ENCODE measurements at regions of chr17 and their contacts with region 1.

Region 1: GRCh38 chr17:81440876-81441244 is 45.6 kb downstream of the BAHCC1 start:
- DNase-seq: peak; percentile 50 to 90
- H3K4me3 ChIP-seq: no peak overlapping the region
- H3K27ac ChIP-seq: no peak overlapping the region
- H3K4me1 ChIP-seq: peaks cover 0 to 2% (median under 1%) of the 10 kb centered on the region in 4 experiments; a peak in 3 of 7 replicates
- H3K27me3 ChIP-seq: no peaks in the 10 kb centered on the region
- CTCF ChIP-seq: peak; percentile 88 to 98 (median 94)
- EP300 ChIP-seq: no peak
- POLR2A ChIP-seq: no peak
- RAD21 ChIP-seq: peak; percentile 67 to 73

Region 2: DNA sequence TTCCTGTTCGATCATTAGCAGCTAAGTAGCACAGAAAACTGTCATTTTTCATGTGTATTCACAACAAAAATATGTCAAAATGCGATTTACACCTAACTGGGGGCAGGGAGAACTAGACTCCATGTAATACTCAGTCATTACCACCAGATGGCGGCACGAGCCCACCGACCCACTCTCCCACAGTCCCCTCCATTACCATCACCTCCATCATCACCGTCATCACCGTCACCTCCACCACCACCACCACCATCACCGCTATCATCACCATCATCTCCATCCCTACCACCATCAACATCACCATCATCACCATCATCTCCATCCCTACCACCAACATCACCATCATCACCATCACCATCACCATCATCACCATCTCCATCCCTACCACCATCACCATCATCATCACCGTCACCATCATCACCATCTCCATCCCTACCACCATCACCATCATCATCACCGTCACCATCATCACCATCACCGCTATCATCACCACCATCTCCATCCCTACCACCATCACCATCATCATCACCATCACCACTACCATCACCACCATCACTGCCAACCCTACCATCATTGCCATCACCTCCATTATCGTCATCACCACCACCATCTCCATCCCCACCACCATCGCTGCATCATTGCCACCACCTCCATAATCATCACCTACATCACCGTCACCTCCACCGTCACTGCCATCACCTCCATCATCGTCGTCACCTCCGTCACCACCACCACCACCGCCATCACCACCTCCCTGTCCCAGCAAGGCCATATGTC is 187.3 kb before region 1 on chr17:
- CTCF ChIA-PET with region 1: interaction called, 14 read pairs
- POLR2A ChIA-PET with region 1: no interaction called
- DNase-seq: peak in 1 of 2 experiments; percentile 74
- H3K4me3 ChIP-seq: no peak overlapping the region
- H3K27ac ChIP-seq: no peak overlapping the region
- H3K4me1 ChIP-seq: peaks cover 0 to 8% (median 2%) of the 10 kb centered on the region in 4 experiments; a peak in 3 of 7 replicates
- H3K27me3 ChIP-seq: no peaks in the 10 kb centered on the region
- CTCF ChIP-seq: peak; percentile 74 to 88 (median 87)
- EP300 ChIP-seq: no peak
- POLR2A ChIP-seq: no peak
- RAD21 ChIP-seq: peak; percentile 89 to 98

Region 3: GRCh38 chr17:81401723-81402529 is 38.9 kb before region 1 on chr17:
- CTCF ChIA-PET with region 1: interaction called, 89 read pairs
- POLR2A ChIA-PET with region 1: no interaction called
- DNase-seq: no peak
- H3K4me3 ChIP-seq: peak overlapping the region in 1 of 4 experiments; percentile 56; a peak in 2 of 8 replicates
- H3K27ac ChIP-seq: no peak overlapping the region
- H3K4me1 ChIP-seq: peaks cover 8 to 41% (median 25%) of the 10 kb centered on the region in 4 experiments
- H3K27me3 ChIP-seq: peaks cover 32 to 59% (median 49%) of the 10 kb centered on the region in 4 experiments
- CTCF ChIP-seq: peak; percentile 37 to 58 (median 46)
- EP300 ChIP-seq: no peak
- POLR2A ChIP-seq: no peak
- RAD21 ChIP-seq: peak in 1 of 2 experiments; percentile 22; a peak in 2 of 4 replicates

Region 4: DNA sequence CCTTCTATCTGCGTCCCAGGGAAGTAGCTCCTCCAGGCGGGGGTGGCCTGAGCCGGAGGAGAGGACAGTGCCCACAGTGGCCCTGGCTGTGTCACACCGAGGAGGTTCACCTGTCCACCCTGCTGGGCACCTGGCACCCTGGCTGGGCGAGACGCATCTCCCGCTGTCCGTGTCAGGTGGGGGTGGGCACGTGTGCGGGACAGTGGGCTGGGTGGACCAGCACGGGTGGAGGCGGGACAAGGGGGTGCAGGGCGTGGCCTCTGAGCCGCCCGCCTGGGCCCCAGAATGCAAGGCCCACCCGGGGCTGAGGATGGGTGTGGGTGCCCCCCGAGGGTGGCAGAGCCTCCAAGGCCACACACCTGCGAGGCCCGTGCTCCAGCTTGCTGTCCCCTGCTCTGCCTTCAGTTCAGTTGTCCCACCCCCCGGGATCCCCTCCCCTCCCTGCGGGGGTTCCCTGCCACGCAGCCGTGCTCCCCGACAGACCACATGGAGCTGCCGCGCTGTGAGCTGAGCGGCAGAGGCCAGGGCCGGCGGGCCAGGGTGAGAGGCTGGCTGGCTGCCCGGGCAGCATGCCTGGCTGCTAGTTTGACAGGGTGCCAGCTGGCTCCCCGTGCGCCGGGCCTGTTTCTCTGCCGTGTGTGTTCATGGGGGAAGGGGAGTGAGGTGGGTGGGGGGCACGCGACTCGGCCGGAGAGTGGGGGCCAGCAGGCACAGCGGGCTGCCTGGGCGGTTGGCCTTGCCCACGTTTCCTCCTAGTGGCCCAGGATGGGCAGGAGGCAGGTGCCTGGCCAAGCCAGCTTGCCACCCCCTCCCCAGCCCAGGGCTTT is 11.7 kb before region 1 on chr17:
- CTCF ChIA-PET with region 1: interaction called, 53 read pairs
- POLR2A ChIA-PET with region 1: interaction called, 7 read pairs
- DNase-seq: no peak
- H3K4me3 ChIP-seq: no peak overlapping the region
- H3K27ac ChIP-seq: no peak overlapping the region
- H3K4me1 ChIP-seq: peaks cover 0 to 3% (median 0%) of the 10 kb centered on the region in 4 experiments; a peak in 3 of 7 replicates
- H3K27me3 ChIP-seq: no peaks in the 10 kb centered on the region
- CTCF ChIP-seq: no peak
- EP300 ChIP-seq: no peak
- POLR2A ChIP-seq: no peak
- RAD21 ChIP-seq: no peak

Region 5: DNA sequence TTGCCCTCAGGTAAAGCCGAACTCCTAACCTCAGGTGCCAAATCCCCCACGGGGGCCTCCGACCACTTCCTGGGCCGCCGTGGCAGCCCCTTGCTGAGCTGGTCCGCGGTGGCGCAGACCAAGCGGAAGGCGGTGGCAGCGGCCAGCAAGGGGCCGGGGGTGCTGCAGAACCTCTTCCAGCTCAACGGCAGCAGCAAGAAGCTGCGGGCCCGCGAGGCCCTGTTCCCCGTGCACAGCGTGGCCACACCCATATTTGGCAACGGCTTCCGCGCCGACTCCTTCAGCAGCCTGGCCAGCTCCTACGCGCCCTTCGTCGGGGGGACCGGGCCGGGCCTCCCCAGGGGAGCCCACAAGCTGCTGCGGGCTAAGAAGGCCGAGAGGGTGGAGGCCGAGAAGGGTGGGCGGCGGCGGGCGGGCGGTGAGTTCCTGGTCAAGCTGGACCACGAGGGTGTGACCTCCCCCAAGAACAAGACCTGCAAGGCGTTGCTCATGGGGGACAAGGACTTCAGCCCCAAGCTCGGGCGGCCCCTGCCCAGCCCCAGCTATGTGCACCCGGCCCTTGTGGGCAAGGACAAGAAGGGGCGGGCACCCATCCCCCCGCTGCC is 20.1 kb after region 1 on chr17:
- CTCF ChIA-PET with region 1: interaction called, 39 read pairs
- POLR2A ChIA-PET with region 1: interaction called, 3 read pairs
- DNase-seq: no peak
- H3K4me3 ChIP-seq: no peak overlapping the region
- H3K27ac ChIP-seq: no peak overlapping the region
- H3K4me1 ChIP-seq: peaks cover 0 to 14% (median 8%) of the 10 kb centered on the region in 4 experiments; a peak in 6 of 7 replicates
- H3K27me3 ChIP-seq: no peaks in the 10 kb centered on the region
- CTCF ChIP-seq: no peak
- EP300 ChIP-seq: no peak
- POLR2A ChIP-seq: no peak
- RAD21 ChIP-seq: no peak

Region 6: GRCh38 chr17:81631482-81631881 is 190.6 kb after region 1 on chr17:
- CTCF ChIA-PET with region 1: no interaction called
- POLR2A ChIA-PET with region 1: no interaction called
- DNase-seq: no peak
- H3K4me3 ChIP-seq: no peak overlapping the region
- H3K27ac ChIP-seq: no peak overlapping the region
- H3K4me1 ChIP-seq: no peaks in the 10 kb centered on the region
- H3K27me3 ChIP-seq: no peaks in the 10 kb centered on the region
- CTCF ChIP-seq: no peak
- EP300 ChIP-seq: no peak
- POLR2A ChIP-seq: no peak
- RAD21 ChIP-seq: no peak